ENCODE measurements at regions of chr11 and their contacts with region 1.

Region 1: DNA sequence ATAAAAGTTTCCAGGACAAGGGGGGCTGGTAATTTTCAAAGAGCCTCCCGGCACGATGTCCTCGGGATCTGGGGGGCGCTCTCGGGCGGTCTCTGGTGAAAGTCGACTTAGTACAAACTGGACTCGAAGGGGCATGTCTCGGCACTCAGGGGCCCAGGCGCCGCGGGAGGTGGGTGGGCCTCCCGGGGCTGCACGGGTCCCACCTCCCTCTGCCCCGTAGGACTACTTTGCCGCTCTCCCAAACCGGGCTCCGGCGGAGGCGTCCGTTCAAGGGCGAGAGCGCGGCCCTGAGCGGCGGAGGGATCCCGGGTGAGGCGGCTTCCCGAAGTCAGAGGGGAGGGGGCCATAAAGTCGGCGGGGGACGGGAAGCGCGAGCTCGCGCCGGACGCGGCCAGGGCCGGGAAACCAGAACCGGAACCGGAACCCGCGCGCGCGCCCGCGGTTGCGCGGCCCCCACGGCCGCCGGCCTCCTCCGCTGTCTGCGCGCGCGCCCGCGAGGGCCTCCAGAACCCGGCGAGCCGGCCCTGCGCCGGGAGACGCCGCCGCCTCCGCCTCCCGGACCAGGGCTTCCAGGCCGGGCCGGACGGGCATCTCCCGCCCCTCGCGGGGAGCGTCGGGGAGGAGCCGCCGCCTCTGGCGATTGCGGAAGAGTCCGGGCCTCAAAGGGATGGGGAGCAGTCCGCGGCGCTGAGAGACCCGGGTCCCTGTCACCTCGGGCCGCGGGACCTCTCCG is at the start of gene ARHGEF12:
- DNase-seq: peak; percentile 98
- H3K4me3 ChIP-seq: peak within 1 kb of the TSS; percentile 91 to 93
- H3K27ac ChIP-seq: peak within 1 kb of the TSS; percentile 81 to 92
- H3K4me1 ChIP-seq: peaks cover 13 to 34% of the 10 kb centered on the region in 2 experiments
- H3K27me3 ChIP-seq: no peaks in the 10 kb centered on the region
- CTCF ChIP-seq: peak; percentile 73
- EP300 ChIP-seq: peak; percentile 41 to 61; a peak in 1 of 4 replicates
- RAD21 ChIP-seq: no peak
- polyA plus RNA-seq, gene ARHGEF12: 12.3 and 15.9 TPM in 2 replicates

Region 2: GRCh38 chr11:120324932-120325810 is 10.9 kb before region 1 on chr11 and contains the start of gene TLCD5:
- CTCF ChIA-PET with region 1: interaction called, 29 read pairs
- POLR2A ChIA-PET with region 1: no interaction called
- DNase-seq: peak; percentile 93
- H3K4me3 ChIP-seq: peak within 1 kb of the TSS; percentile 78 to 83
- H3K27ac ChIP-seq: peak within 1 kb of the TSS; percentile 85 to 88
- H3K4me1 ChIP-seq: peaks cover 9 to 21% of the 10 kb centered on the region in 2 experiments
- H3K27me3 ChIP-seq: no peaks in the 10 kb centered on the region
- CTCF ChIP-seq: peak; percentile 34
- EP300 ChIP-seq: peak in 1 of 2 experiments; percentile 17; a peak in 1 of 4 replicates
- RAD21 ChIP-seq: no peak
- polyA plus RNA-seq, gene TLCD5: 12.7 and 18.7 TPM in 2 replicates

Region 3: GRCh38 chr11:120386774-120387371 is 50.8 kb after region 1 on chr11:
- CTCF ChIA-PET with region 1: interaction called, 11 read pairs
- POLR2A ChIA-PET with region 1: no interaction called
- DNase-seq: no peak
- H3K4me3 ChIP-seq: no peak overlapping the region
- H3K27ac ChIP-seq: no peak overlapping the region; a peak in 1 of 4 replicates
- H3K4me1 ChIP-seq: peaks cover 20 to 38% of the 10 kb centered on the region in 2 experiments
- H3K27me3 ChIP-seq: no peaks in the 10 kb centered on the region
- CTCF ChIP-seq: no peak
- EP300 ChIP-seq: no peak
- RAD21 ChIP-seq: no peak

Region 4: GRCh38 chr11:120446802-120447201 is 110.7 kb after region 1 on chr11:
- CTCF ChIA-PET with region 1: interaction called, 12 read pairs
- POLR2A ChIA-PET with region 1: no interaction called
- DNase-seq: no peak
- H3K4me3 ChIP-seq: no peak overlapping the region
- H3K27ac ChIP-seq: no peak overlapping the region
- H3K4me1 ChIP-seq: no peaks in the 10 kb centered on the region
- H3K27me3 ChIP-seq: no peaks in the 10 kb centered on the region
- CTCF ChIP-seq: no peak
- EP300 ChIP-seq: no peak
- RAD21 ChIP-seq: no peak

Region 5: GRCh38 chr11:120457996-120458395 is 121.9 kb after region 1 on chr11:
- CTCF ChIA-PET with region 1: interaction called, 16 read pairs
- POLR2A ChIA-PET with region 1: no interaction called
- DNase-seq: no peak
- H3K4me3 ChIP-seq: no peak overlapping the region
- H3K27ac ChIP-seq: peak overlapping the region in 1 of 2 experiments; percentile 0; a peak in 1 of 4 replicates
- H3K4me1 ChIP-seq: no peaks in the 10 kb centered on the region
- H3K27me3 ChIP-seq: no peaks in the 10 kb centered on the region
- CTCF ChIP-seq: no peak
- EP300 ChIP-seq: no peak
- RAD21 ChIP-seq: no peak

Region 6: GRCh38 chr11:120500414-120501071 is 164.5 kb after region 1 on chr11:
- CTCF ChIA-PET with region 1: interaction called, 16 read pairs
- POLR2A ChIA-PET with region 1: no interaction called
- DNase-seq: no peak
- H3K4me3 ChIP-seq: no peak overlapping the region
- H3K27ac ChIP-seq: no peak overlapping the region
- H3K4me1 ChIP-seq: no peaks in the 10 kb centered on the region
- H3K27me3 ChIP-seq: no peaks in the 10 kb centered on the region
- CTCF ChIP-seq: no peak
- EP300 ChIP-seq: no peak
- RAD21 ChIP-seq: no peak

Region 7: DNA sequence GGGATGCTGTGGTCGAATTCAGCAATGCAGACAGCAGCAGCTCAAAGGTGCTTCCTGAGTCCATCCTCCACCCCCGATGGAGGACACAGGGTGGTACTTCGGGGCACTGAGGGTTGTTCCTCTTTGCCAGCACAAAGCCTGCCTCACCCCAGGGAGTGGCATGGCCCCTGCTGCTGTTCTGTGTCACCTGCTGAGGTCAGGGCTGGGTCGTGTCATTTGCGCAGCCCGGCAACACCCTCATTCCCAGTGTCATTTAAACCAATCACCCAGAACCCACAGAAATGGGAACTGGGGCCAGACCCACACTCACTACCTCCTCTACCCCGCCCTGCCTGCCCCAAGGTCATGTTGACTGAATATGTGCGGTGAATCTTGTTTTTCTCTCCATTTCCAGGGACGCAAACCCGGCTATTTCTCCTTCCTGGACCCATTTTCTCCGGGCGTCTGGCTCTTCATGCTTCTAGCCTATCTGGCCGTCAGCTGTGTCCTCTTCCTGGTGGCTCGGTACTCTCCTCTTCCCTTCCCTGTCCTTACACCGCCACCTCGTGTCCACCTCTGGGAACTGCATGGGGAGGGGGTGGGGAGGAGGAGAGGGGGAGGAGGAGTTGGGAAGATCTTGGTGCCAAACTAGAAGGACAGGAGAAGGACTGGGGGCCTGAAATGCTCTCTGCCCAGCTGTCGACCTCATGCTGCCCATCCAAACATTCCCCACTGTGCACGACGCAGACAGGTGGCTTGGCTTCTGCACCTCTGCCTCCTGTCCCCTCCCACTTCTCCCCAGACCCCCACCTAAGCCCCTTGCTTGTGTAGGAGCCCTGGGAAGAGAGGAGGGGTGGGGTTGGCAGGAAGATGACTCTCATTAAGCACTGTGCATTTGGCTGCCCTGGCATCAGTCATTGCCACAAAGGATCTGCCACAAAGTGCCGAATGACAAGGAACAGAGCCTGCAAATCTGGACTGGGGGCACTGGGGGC is 616.7 kb after region 1 on chr11:
- CTCF ChIA-PET with region 1: interaction called, 17 read pairs
- POLR2A ChIA-PET with region 1: no interaction called
- DNase-seq: peak; percentile 89
- H3K4me3 ChIP-seq: peak overlapping the region in 1 of 2 experiments; percentile 54; a peak in 1 of 4 replicates
- H3K27ac ChIP-seq: peak overlapping the region in 1 of 2 experiments; percentile 62; a peak in 2 of 4 replicates
- H3K4me1 ChIP-seq: peaks cover 0 to 34% of the 10 kb centered on the region in 2 experiments; a peak in 1 of 4 replicates
- H3K27me3 ChIP-seq: no peaks in the 10 kb centered on the region; the same call in 1 of the 2 replicates
- CTCF ChIP-seq: peak; percentile 73
- EP300 ChIP-seq: no peak
- RAD21 ChIP-seq: peak; percentile 93

Measured in SK-N-SH (cell line).